ENCODE measurements at regions of chr6 and their contacts with region 1.

Region 1: DNA sequence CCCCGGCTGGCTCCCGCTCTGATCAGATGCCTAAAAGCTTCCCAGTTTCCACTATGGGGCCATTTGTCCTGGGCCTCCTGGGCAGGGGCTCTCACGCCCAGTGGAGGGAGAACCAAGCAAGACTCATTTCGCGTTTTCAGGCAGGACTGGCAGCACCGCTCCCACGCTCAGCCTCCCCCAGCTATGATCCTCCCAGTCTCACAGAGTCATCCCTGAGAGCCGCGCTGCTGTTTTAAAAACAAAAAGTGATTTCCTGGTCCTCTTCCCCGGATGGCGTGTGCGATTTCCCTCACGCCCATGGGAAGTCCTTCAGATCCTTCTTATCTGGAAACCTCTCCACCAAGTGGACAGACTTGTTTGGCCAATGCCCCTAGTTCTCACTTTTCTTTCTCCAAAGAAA is at the start of gene ADGRF5:
- DNase-seq: peak; percentile 36 to 56
- ATAC-seq: peak; percentile 67 to 88 (median 76)
- H3K4me3 ChIP-seq: peak within 1 kb of the TSS; percentile 33 to 65 (median 56)
- H3K27ac ChIP-seq: peak within 1 kb of the TSS; percentile 75 to 97 (median 87)
- H3K4me1 ChIP-seq: peaks cover 0 to 74% (median 17%) of the 10 kb centered on the region in 9 donors
- H3K27me3 ChIP-seq: no peaks in the 10 kb centered on the region
- CTCF ChIP-seq: peak in 1 of 9 donors; percentile 22
- total RNA-seq, gene ADGRF5: 27.1 to 92.1 (median 35.4) TPM

Region 2: GRCh38 chr6:46949632-46950280 is 28.0 kb after region 1 on chr6:
- intact Hi-C with region 1: loop called in 1 of 10 experiments (anchors 2 kb)
- DNase-seq: peak; percentile 71 to 86
- ATAC-seq: peak; percentile 65 to 90 (median 79)
- H3K4me3 ChIP-seq: peak overlapping the region in 2 of 10 donors; percentile 11 to 17
- H3K27ac ChIP-seq: peak overlapping the region; percentile 11 to 88 (median 80)
- H3K4me1 ChIP-seq: peaks cover 3 to 73% (median 35%) of the 10 kb centered on the region in 9 donors
- H3K27me3 ChIP-seq: peaks cover 0 to 4% (median 0%) of the 10 kb centered on the region in 7 donors
- CTCF ChIP-seq: no peak